Mammary epithelial cell (primary cell): ENCODE measurements at regions of chr11 and their contacts with region 1.

Region 1: GRCh38 chr11:47152953-47153950 is 23.4 kb downstream of the ARFGAP2 start:
- DNase-seq: peak; percentile 55
- H3K4me3 ChIP-seq: no peak overlapping the region
- H3K27ac ChIP-seq: no peak overlapping the region
- H3K4me1 ChIP-seq: no peaks in the 10 kb centered on the region
- H3K27me3 ChIP-seq: no peaks in the 10 kb centered on the region
- CTCF ChIP-seq: peak; percentile 99 to 100

Region 2: DNA sequence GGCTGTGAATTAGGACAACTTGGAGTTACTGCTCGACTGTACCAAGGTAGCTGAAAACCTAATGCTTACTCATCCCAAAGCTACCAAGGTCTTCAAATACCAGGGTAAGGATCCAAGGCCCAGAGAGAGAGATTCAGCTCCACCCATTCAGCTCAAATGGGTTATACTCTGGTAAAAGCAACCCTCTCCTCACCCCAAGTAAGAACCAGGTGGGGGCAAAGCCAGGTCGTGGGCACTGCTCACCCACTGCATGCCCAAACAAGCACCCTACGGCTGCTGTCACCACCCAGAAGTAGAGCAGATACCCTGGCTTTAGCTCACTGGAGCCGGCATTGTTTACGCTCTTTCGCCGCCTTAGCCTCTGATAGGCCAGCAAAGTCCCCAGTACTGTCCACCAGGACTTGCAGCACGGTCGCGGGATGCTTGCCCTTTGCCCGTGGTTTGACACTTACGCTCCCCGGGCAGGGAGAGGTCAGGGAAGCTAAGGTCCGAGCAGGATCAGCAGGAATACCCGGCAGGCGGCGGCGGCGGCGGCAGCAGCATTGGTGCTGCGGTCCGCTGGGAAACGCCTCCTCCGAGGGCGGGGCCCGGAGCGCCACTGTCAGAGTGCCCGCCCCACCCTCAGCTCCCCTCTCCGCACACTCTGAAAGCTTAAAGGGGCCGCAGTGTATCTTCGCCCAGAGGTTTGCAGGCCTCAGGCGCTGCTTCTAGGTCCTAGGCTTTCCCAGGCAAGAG is 326.8 kb before region 1 on chr11:
- CTCF ChIA-PET with region 1: interaction called, 3 read pairs
- dilution Hi-C with region 1: no loop called
- in situ Hi-C with region 1: no loop called
- intact Hi-C with region 1: loop called (anchors 5 kb)
- DNase-seq: peak; percentile 77
- H3K4me3 ChIP-seq: peak overlapping the region; percentile 41 to 62 (median 57)
- H3K27ac ChIP-seq: peak overlapping the region; percentile 19
- H3K4me1 ChIP-seq: peaks cover 29% of the 10 kb centered on the region
- H3K27me3 ChIP-seq: no peaks in the 10 kb centered on the region
- CTCF ChIP-seq: peak in 1 of 2 donors; percentile 28

Region 3: DNA sequence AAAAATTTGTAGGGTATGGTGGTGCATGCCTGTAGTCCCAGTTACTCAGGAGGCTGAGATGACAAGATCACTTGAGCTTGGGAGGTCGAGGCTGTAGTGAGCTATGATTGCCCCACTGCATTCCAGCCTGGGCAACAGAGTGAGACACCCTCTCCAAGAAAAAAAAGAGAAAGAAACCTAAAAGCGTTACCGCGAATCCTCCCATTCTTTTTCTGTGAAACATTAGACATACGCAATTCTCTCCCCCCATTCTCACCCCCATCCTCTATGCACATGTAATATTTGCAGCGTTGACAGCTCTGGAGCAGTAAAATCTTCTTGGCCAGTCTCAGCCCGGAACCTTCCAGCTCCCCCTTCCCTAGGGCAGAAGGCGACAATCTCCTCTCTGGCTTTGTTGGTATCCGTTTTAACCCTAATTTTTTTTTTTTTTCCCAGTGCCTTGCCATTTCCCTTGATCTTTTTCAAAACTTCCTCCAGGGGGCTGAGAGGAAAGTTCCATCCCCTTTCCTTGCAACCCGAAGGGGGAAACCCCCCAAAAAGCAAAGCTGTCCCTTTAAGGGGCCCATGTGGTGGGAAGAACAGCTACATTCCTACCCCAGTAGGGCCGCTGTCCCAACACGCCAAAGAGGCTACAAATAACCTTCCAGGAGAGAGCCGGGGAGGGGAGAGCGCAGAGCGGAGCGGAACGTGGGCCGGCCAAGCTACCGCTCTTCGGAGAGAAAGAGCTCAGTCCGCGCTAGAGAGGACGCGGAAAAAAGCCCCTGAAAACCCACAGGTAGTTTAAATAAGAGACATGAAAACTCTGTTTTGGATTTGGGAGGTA is 236.8 kb before region 1 on chr11:
- CTCF ChIA-PET with region 1: no interaction called
- dilution Hi-C with region 1: loop called (anchors 25 kb)
- in situ Hi-C with region 1: loop called in 1 of 2 experiments (anchors 10 kb)
- intact Hi-C with region 1: loop called (anchors 1 kb)
- DNase-seq: peak; percentile 81
- H3K4me3 ChIP-seq: peak overlapping the region; percentile 57 to 66 (median 62)
- H3K27ac ChIP-seq: peak overlapping the region; percentile 44
- H3K4me1 ChIP-seq: peaks cover 43% of the 10 kb centered on the region
- H3K27me3 ChIP-seq: no peaks in the 10 kb centered on the region
- CTCF ChIP-seq: peak in 1 of 2 donors; percentile 15

Region 4: GRCh38 chr11:47004595-47005033 is 148.6 kb before region 1 on chr11:
- CTCF ChIA-PET with region 1: interaction called, 11 read pairs
- dilution Hi-C with region 1: no loop called
- in situ Hi-C with region 1: no loop called
- intact Hi-C with region 1: no loop called
- DNase-seq: peak; percentile 61
- H3K4me3 ChIP-seq: no peak overlapping the region
- H3K27ac ChIP-seq: no peak overlapping the region
- H3K4me1 ChIP-seq: peaks cover 5% of the 10 kb centered on the region
- H3K27me3 ChIP-seq: no peaks in the 10 kb centered on the region
- CTCF ChIP-seq: no peak

Region 5: GRCh38 chr11:47233989-47234668 is 80.9 kb after region 1 on chr11:
- CTCF ChIA-PET with region 1: no interaction called
- dilution Hi-C with region 1: loop called (anchors 5 kb)
- in situ Hi-C with region 1: no loop called
- intact Hi-C with region 1: no loop called
- DNase-seq: peak; percentile 52
- H3K4me3 ChIP-seq: no peak overlapping the region
- H3K27ac ChIP-seq: peak overlapping the region; percentile 2
- H3K4me1 ChIP-seq: peaks cover 19% of the 10 kb centered on the region
- H3K27me3 ChIP-seq: no peaks in the 10 kb centered on the region
- CTCF ChIP-seq: peak in 1 of 2 donors; percentile 34